PC-3 (cell line): ENCODE measurements at regions of chr4 and their contacts with region 1.

Region 1: GRCh38 chr4:39591290-39591689 is 47.4 kb downstream of the SMIM14 start:
- DNase-seq: peak; percentile 72
- ATAC-seq: peak; percentile 66
- H3K4me3 ChIP-seq: no peak overlapping the region
- H3K27ac ChIP-seq: no peak overlapping the region
- H3K4me1 ChIP-seq: no peaks in the 10 kb centered on the region
- H3K27me3 ChIP-seq: no peaks in the 10 kb centered on the region
- CTCF ChIP-seq: peak; percentile 65

Region 2: DNA sequence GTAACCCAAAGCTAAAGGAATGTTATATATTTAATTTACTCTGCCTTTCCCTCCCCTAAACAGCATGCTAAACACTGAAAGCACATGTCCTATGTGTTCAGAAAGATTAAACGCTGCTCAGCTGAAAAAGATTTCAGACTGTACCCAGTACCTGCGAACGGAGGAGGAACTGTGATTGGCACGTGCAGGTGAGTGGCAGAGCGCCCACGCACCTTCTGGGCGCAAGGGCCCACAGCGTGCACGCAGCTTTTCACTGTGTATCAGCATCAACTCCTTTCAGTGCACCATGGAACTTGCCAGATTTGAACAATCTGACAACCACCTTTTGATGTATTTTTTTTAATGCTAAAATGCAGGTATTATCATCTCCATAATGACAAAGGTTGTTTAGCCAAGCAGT is 312.8 kb before region 1 on chr4:
- CTCF ChIA-PET with region 1: no interaction called
- POLR2A ChIA-PET with region 1: no interaction called
- intact Hi-C with region 1: no loop called
- DNase-seq: no peak
- ATAC-seq: no peak
- H3K4me3 ChIP-seq: no peak overlapping the region
- H3K27ac ChIP-seq: no peak overlapping the region
- H3K4me1 ChIP-seq: no peaks in the 10 kb centered on the region
- H3K27me3 ChIP-seq: no peaks in the 10 kb centered on the region
- CTCF ChIP-seq: no peak

Region 3: GRCh38 chr4:39548428-39548921 is 42.8 kb before region 1 on chr4:
- CTCF ChIA-PET with region 1: no interaction called
- POLR2A ChIA-PET with region 1: interaction called, 18 read pairs
- intact Hi-C with region 1: no loop called
- DNase-seq: peak; percentile 59
- ATAC-seq: peak; percentile 94
- H3K4me3 ChIP-seq: no peak overlapping the region
- H3K27ac ChIP-seq: peak overlapping the region; percentile 40
- H3K4me1 ChIP-seq: peaks cover 31% of the 10 kb centered on the region
- H3K27me3 ChIP-seq: no peaks in the 10 kb centered on the region
- CTCF ChIP-seq: no peak